ENCODE measurements at regions of chr1 and their contacts with region 1.

Region 1: DNA sequence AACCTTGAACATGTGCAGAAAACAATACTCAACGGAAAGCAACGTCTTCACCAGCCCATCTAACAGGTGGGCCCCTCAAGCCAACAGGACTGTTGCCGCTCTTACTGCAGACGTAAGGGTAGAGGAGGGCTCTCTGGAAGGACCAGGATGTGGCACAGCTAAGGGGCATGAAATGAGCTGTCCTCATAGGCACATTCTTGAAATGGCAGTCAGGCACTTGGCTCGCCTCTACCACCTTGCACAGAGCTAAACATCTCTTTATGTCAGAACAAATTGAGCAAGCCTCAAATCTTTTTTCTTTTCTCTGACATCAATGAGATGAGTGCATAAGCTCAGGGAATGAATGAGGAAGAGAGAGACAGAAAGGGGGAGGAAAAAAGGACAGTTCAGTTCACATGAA is 86.4 kb upstream of the ESRRG start:
- DNase-seq: no peak
- H3K4me3 ChIP-seq: no peak overlapping the region
- H3K27ac ChIP-seq: no peak overlapping the region
- H3K4me1 ChIP-seq: no peaks in the 10 kb centered on the region
- H3K27me3 ChIP-seq: no peaks in the 10 kb centered on the region
- CTCF ChIP-seq: no peak

Region 2: GRCh38 chr1:216688127-216688657 is 121.5 kb before region 1 on chr1:
- CTCF ChIA-PET with region 1: no interaction called
- POLR2A ChIA-PET with region 1: no interaction called
- intact Hi-C with region 1: no loop called
- DNase-seq: no peak
- H3K4me3 ChIP-seq: no peak overlapping the region
- H3K27ac ChIP-seq: no peak overlapping the region
- H3K4me1 ChIP-seq: no peaks in the 10 kb centered on the region
- H3K27me3 ChIP-seq: no peaks in the 10 kb centered on the region
- CTCF ChIP-seq: no peak

Region 3: DNA sequence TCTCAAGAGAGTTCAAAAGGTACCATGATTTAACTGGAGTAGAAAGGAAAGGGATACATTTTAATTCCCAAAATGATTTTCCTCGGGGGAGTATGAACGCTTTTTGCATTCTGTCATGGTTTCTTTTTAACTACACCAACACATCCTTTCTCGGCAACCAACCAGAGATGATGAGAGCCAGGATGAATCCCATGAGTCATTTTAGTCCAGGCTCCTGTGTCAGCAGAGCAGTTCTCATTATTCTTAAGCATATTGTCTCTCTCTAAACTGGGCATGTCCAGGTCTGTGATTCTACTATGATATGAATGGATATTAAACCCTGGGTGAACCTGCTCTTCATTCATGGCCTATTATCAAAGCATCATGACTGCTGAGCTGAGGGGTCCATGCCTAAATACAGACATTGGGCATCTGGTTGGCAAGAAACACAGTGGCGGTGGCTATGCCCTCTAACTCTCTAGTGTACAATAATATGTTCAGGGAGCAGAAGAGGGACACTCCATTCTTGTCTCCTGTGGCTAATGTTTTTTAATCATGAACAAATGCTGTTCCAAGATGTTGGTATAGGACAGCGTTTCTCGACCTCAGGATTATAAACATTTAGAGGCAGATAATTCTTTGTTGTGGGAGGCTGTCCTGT is 37.9 kb after region 1 on chr1:
- CTCF ChIA-PET with region 1: no interaction called
- POLR2A ChIA-PET with region 1: no interaction called
- intact Hi-C with region 1: no loop called
- DNase-seq: no peak
- H3K4me3 ChIP-seq: no peak overlapping the region
- H3K27ac ChIP-seq: no peak overlapping the region
- H3K4me1 ChIP-seq: no peaks in the 10 kb centered on the region
- H3K27me3 ChIP-seq: no peaks in the 10 kb centered on the region
- CTCF ChIP-seq: no peak

Region 4: GRCh38 chr1:218527737-218528136 is 1718.1 kb after region 1 on chr1:
- CTCF ChIA-PET with region 1: no interaction called
- POLR2A ChIA-PET with region 1: interaction called, 29 read pairs
- intact Hi-C with region 1: no loop called
- DNase-seq: no peak
- H3K4me3 ChIP-seq: no peak overlapping the region
- H3K27ac ChIP-seq: no peak overlapping the region
- H3K4me1 ChIP-seq: 0 out of 2 replicates have a peak, but pooled peaks cover 7% of the 10 kb centered on the region
- H3K27me3 ChIP-seq: no peaks in the 10 kb centered on the region
- CTCF ChIP-seq: no peak

Measured in PC-9 (cell line).